ENCODE measurements at regions of chrX and their contacts with region 1.

Region 1: GRCh38 chrX:104565791-104566680 is at the start of gene IL1RAPL2:
- DNase-seq: peak; percentile 81
- ATAC-seq: peak; percentile 75
- H3K4me3 ChIP-seq: peak within 1 kb of the TSS; percentile 80
- H3K27ac ChIP-seq: no peak within 1 kb of the TSS
- H3K4me1 ChIP-seq: no peaks in the 10 kb centered on the region
- H3K27me3 ChIP-seq: peaks cover 17% of the 10 kb centered on the region
- CTCF ChIP-seq: peak; percentile 82
- total RNA-seq, gene IL1RAPL2: 0.52 and 0.62 TPM in 2 replicates

Region 2: GRCh38 chrX:104310090-104310489 is 255.9 kb before region 1 on chrX:
- CTCF ChIA-PET with region 1: no interaction called
- POLR2A ChIA-PET with region 1: no interaction called
- intact Hi-C with region 1: loop called (anchors 5 kb)
- DNase-seq: peak; percentile 73
- ATAC-seq: peak; percentile 82
- H3K4me3 ChIP-seq: peak overlapping the region; percentile 56
- H3K27ac ChIP-seq: no peak overlapping the region
- H3K4me1 ChIP-seq: peaks cover 13% of the 10 kb centered on the region
- H3K27me3 ChIP-seq: no peaks in the 10 kb centered on the region
- CTCF ChIP-seq: peak; percentile 72

Region 3: DNA sequence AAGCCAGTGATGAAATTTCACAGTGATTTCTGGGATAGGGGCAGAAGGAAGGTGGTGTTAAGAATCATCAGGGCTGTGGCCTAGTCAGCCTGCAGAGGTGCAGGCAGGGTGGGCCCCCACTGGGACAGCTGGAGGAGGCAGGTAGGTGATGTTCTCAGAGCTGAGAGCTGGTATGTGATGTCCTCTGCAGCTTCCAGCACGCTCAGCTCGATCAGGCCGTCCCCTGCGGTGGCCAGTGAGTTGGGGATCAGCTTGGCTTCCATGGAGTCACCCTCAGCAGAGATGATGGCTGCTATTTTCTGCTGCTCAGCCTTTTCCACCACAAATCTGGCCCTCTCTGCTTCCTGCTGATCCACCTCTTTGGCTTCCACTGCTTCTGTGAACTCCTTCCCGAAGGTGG is 81.0 kb after region 1 on chrX:
- CTCF ChIA-PET with region 1: no interaction called
- POLR2A ChIA-PET with region 1: interaction called, 3 read pairs
- intact Hi-C with region 1: loop called (anchors 5 kb)
- DNase-seq: no peak
- ATAC-seq: no peak
- H3K4me3 ChIP-seq: no peak overlapping the region
- H3K27ac ChIP-seq: no peak overlapping the region
- H3K4me1 ChIP-seq: no peaks in the 10 kb centered on the region
- H3K27me3 ChIP-seq: no peaks in the 10 kb centered on the region
- CTCF ChIP-seq: no peak

Region 4: GRCh38 chrX:104668550-104668949 is 102.5 kb after region 1 on chrX:
- CTCF ChIA-PET with region 1: no interaction called
- POLR2A ChIA-PET with region 1: no interaction called
- intact Hi-C with region 1: loop called (anchors 5 kb)
- DNase-seq: peak; percentile 57
- ATAC-seq: peak; percentile 57; the same call in 1 of the 2 replicates
- H3K4me3 ChIP-seq: no peak overlapping the region
- H3K27ac ChIP-seq: no peak overlapping the region
- H3K4me1 ChIP-seq: no peaks in the 10 kb centered on the region
- H3K27me3 ChIP-seq: no peaks in the 10 kb centered on the region
- CTCF ChIP-seq: peak; percentile 63

Region 5: GRCh38 chrX:104712515-104712914 is 146.5 kb after region 1 on chrX:
- CTCF ChIA-PET with region 1: interaction called, 6 read pairs
- POLR2A ChIA-PET with region 1: no interaction called
- intact Hi-C with region 1: loop called (anchors 1 kb)
- DNase-seq: peak; percentile 40
- ATAC-seq: peak; percentile 54
- H3K4me3 ChIP-seq: no peak overlapping the region
- H3K27ac ChIP-seq: no peak overlapping the region
- H3K4me1 ChIP-seq: peaks cover 15% of the 10 kb centered on the region
- H3K27me3 ChIP-seq: no peaks in the 10 kb centered on the region
- CTCF ChIP-seq: peak; percentile 47

Region 6: GRCh38 chrX:104922206-104922621 is 356.2 kb after region 1 on chrX:
- CTCF ChIA-PET with region 1: interaction called, 5 read pairs
- POLR2A ChIA-PET with region 1: no interaction called
- intact Hi-C with region 1: loop called (anchors 1 kb)
- DNase-seq: peak; percentile 87
- ATAC-seq: peak; percentile 84
- H3K4me3 ChIP-seq: no peak overlapping the region
- H3K27ac ChIP-seq: no peak overlapping the region
- H3K4me1 ChIP-seq: peaks cover 3% of the 10 kb centered on the region; the same call in 1 of the 2 replicates
- H3K27me3 ChIP-seq: no peaks in the 10 kb centered on the region
- CTCF ChIP-seq: peak; percentile 97